ENCODE measurements at regions of chr2 and their contacts with region 1.

Region 1: DNA sequence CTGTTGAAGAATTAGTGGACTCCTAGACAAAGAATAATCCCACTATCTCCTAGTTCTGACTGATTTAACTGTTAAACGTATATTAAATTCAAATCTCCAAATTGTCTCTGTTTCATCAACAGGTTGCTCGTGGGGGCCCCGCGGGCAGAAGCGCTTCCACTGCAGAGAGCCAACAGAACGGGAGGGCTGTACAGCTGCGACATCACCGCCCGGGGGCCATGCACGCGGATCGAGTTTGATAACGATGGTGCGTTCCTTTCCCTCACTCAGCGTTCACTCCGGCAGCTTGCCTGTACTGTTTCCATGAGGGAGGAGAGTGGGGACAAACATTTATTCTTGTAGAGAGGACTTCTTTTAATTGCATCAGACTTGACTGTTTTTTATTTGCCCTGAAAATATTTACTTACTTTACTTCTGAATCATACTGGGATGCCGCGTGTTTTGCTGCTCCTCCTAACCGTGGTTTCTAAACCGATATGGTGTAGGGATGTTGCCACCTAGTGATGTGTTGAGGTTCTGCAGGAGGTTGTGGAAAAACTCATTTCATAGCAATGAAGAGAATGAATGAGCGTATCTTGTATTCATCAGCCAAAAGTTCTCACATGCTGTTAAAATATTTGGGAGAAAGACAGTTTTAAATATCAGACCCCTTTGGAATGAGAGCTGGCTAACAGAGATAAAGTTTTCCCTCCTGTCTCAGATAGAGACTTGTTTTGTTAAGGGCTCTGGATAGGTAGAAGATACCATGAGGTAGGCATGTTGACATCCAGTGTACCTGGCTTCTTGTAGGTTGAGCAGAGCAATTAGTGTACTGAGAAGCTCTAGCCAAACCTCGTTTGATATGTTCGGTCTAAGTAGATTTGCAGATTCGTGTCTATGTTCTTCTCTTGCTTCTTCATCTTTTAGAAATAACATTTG is 38.3 kb downstream of the ITGA6 start:
- DNase-seq: peak; percentile 88
- ATAC-seq: peak; percentile 69
- H3K4me3 Mint-ChIP-seq: peak overlapping the region; percentile 39
- H3K27ac Mint-ChIP-seq: peak overlapping the region; percentile 76
- H3K4me1 Mint-ChIP-seq: peaks cover 60% of the 10 kb centered on the region
- H3K27me3 Mint-ChIP-seq: no peaks in the 10 kb centered on the region
- CTCF ChIP-seq: peak; percentile 95

Region 2: GRCh38 chr2:172131713-172132555 is 333.7 kb before region 1 on chr2:
- CTCF ChIA-PET with region 1: interaction called, 20 read pairs
- POLR2A ChIA-PET with region 1: no interaction called
- intact Hi-C with region 1: no loop called
- DNase-seq: no peak
- ATAC-seq: no peak
- H3K4me3 Mint-ChIP-seq: no peak overlapping the region
- H3K27ac Mint-ChIP-seq: no peak overlapping the region
- H3K4me1 Mint-ChIP-seq: no peaks in the 10 kb centered on the region
- H3K27me3 Mint-ChIP-seq: peaks cover 3% of the 10 kb centered on the region
- CTCF ChIP-seq: no peak

Region 3: DNA sequence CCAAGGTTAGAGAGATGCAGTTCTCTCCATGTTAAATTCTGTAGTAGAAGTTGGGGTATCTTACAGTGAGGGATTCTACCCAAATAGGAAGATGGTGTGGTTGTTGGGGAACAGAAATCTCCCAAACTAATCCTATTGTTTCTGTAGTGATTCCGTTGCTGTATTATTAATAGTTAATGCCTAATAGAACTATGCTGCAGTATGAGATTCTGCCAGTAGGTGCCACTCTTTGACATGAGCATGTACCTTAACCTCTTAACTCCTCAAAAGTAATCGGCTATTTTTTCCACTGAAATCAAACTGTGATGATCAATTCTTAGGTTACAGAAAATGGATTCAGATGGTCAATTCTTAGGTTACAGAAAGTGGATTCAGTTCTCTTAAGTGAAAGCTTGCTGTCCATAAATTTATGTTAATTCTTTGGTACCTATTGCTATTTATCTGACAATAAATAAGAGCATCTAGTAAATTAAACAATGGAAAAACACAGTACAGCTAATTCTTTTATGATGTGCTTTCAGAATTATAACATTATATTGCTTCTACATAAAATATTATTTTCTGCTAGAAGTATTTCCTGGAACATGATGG is 265.1 kb before region 1 on chr2:
- CTCF ChIA-PET with region 1: interaction called, 26 read pairs
- POLR2A ChIA-PET with region 1: no interaction called
- intact Hi-C with region 1: no loop called
- DNase-seq: peak; percentile 34
- ATAC-seq: no peak
- H3K4me3 Mint-ChIP-seq: no peak overlapping the region
- H3K27ac Mint-ChIP-seq: no peak overlapping the region
- H3K4me1 Mint-ChIP-seq: peaks cover 6% of the 10 kb centered on the region
- H3K27me3 Mint-ChIP-seq: no peaks in the 10 kb centered on the region
- CTCF ChIP-seq: peak; percentile 62

Region 4: DNA sequence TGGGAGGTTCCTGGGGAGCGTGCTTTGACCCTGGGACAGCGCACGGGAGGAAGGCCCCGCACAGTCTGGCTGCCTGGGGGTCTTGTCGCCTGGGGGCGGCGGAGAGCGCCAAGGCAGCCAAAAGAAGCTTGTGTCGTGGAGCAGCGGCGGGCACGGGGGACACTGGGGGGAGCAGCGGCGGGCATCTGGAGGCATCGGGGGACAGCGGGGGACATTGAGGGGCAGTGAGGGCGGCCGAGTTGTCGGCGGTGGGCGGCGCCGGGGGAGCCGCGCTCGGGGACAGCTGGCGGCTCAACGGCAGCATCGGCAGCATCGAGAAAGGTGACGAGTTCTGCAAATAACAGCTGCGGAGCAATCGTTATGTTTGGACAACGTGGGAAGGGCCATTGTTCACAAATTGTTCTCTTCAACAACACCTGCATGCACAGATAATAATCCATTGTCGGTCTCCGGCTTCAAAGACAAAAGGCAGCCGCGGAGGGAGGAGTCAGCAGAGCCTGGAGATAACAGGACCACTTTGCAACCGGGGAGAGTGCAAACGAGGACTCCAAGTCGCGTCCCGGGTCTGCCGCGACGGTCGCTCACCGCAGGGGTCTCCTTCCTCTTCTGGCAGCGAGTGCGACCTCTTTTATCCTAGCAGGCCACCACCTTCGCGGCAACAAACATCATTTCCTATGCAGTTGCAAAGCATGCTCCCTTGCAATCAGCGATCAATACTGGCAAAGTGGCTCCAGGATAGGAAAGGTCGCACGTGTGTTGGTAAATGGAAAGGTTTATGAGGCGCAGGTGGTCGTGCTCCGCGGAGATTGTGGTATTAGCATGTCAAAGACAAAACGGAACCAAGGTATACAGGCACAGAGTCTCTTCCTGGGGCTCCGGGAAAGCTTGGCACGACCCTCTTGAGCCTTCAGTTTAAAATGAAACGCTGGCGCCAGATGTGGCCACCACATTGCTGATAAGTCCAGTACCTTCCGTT is 230.7 kb before region 1 on chr2:
- CTCF ChIA-PET with region 1: interaction called, 14 read pairs
- POLR2A ChIA-PET with region 1: no interaction called
- intact Hi-C with region 1: no loop called
- DNase-seq: peak; percentile 46
- ATAC-seq: peak; percentile 62
- H3K4me3 Mint-ChIP-seq: peak overlapping the region; percentile 76
- H3K27ac Mint-ChIP-seq: no peak overlapping the region
- H3K4me1 Mint-ChIP-seq: peaks cover 14% of the 10 kb centered on the region
- H3K27me3 Mint-ChIP-seq: peaks cover 27% of the 10 kb centered on the region
- CTCF ChIP-seq: no peak

Region 5: DNA sequence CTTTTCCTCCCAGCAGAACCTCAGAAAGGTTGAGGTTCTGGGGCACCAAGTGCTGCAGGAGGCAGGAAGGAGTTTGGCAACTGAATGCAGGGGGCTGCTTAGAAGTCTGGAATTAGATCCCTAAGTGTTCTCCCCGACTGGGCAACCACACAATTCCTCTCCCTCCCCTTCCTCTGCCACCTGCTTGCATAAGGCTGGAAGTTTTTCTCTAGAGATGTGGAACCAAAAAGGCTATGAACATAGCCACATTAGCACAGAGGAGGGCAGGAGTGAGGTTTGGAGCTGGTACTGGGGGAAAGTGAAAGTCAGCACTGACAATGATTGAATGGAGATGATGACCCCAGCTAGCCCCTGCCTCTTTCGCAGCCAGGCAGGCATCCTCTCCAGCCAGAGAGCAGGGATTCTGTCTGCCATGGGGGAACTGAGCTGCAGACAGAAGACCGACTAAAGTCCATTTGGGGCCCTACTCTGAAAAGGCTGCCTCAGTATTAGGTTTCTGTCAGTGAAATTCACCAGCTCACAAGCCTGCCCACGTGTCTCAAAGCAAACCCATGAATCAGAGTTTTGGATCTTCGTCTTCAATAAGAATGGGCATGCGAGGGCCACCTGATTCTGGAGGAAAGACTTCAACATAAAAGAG is 126.2 kb before region 1 on chr2:
- CTCF ChIA-PET with region 1: interaction called, 25 read pairs
- POLR2A ChIA-PET with region 1: no interaction called
- intact Hi-C with region 1: no loop called
- DNase-seq: peak; percentile 7
- ATAC-seq: peak; percentile 51
- H3K4me3 Mint-ChIP-seq: peak overlapping the region; percentile 27
- H3K27ac Mint-ChIP-seq: no peak overlapping the region
- H3K4me1 Mint-ChIP-seq: peaks cover 21% of the 10 kb centered on the region
- H3K27me3 Mint-ChIP-seq: no peaks in the 10 kb centered on the region
- CTCF ChIP-seq: no peak

Region 6: GRCh38 chr2:172427256-172427989 is 38.3 kb before region 1 on chr2 and contains the start of gene ITGA6:
- CTCF ChIA-PET with region 1: interaction called, 746 read pairs
- POLR2A ChIA-PET with region 1: interaction called, 66 read pairs
- intact Hi-C with region 1: loop called (anchors 2 kb)
- DNase-seq: peak; percentile 77
- ATAC-seq: peak; percentile 71
- H3K4me3 Mint-ChIP-seq: peak within 1 kb of the TSS; percentile 76
- H3K27ac Mint-ChIP-seq: peak within 1 kb of the TSS; percentile 76
- H3K4me1 Mint-ChIP-seq: peaks cover 57% of the 10 kb centered on the region
- H3K27me3 Mint-ChIP-seq: peaks cover 4% of the 10 kb centered on the region
- CTCF ChIP-seq: peak; percentile 37
- total RNA-seq, gene ITGA6: 7.9 to 8.4 TPM

Region 7: GRCh38 chr2:172582656-172583055 is 117.0 kb after region 1 on chr2:
- CTCF ChIA-PET with region 1: no interaction called
- POLR2A ChIA-PET with region 1: no interaction called
- intact Hi-C with region 1: no loop called
- DNase-seq: no peak
- ATAC-seq: no peak
- H3K4me3 Mint-ChIP-seq: no peak overlapping the region
- H3K27ac Mint-ChIP-seq: no peak overlapping the region
- H3K4me1 Mint-ChIP-seq: peaks cover 56% of the 10 kb centered on the region
- H3K27me3 Mint-ChIP-seq: no peaks in the 10 kb centered on the region
- CTCF ChIP-seq: no peak